Heart right ventricle (tissue), 16 donors: ENCODE measurements at regions of chr11 and their contacts with region 1.

Region 1: DNA sequence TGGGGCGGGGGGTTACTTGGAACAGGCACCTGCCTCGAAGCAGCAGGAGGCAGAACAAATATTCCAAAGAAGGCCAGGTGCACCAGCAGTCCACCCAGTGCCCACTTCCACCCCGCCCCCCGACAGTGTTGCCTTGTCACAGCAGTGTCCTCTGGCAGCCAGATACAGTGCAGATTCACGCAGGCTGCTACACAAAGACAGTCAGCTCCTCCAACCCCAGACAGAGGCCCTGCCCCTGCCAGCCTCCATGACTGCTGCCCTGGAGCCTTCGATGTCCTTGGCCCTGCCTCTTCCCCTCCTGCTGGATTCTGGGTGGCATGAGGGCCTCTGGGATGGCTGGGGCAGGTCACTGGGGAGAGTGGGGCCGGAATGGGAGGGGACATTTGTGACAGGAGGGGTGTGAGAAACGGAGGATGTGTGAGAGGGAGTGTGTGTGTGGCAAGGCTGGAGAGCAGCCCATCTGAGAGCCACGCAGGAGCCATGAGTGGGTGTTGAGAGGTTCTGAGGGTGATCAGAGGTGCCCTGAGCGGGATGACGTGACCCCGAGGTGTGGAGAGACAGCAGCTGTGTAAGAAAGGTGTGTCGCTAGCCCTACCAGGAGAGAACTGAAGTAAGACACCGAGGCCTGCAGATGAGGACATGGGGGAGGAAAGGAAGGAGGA is 173.7 kb downstream of the CEP164 start:
- DNase-seq: no peak
- ATAC-seq: peak in 1 of 8 donors; percentile 18
- H3K4me3 ChIP-seq: no peak overlapping the region
- H3K27ac ChIP-seq: no peak overlapping the region
- H3K4me1 ChIP-seq: no peaks in the 10 kb centered on the region
- H3K27me3 ChIP-seq: peaks cover 0 to 10% (median 0%) of the 10 kb centered on the region in 7 donors
- CTCF ChIP-seq: no peak

Region 2: GRCh38 chr11:117444711-117445658 is 56.4 kb before region 1 on chr11:
- intact Hi-C with region 1: no loop called
- DNase-seq: no peak
- ATAC-seq: peak in 3 of 8 donors; percentile 46 to 56 (median 52)
- H3K4me3 ChIP-seq: no peak overlapping the region
- H3K27ac ChIP-seq: no peak overlapping the region
- H3K4me1 ChIP-seq: peaks cover 0 to 11% (median 0%) of the 10 kb centered on the region in 9 donors
- H3K27me3 ChIP-seq: peaks cover 0 to 20% (median 10%) of the 10 kb centered on the region in 7 donors
- CTCF ChIP-seq: no peak

Region 3: GRCh38 chr11:117560780-117561530 is 59.6 kb after region 1 on chr11:
- intact Hi-C with region 1: loop called in 1 of 10 experiments (anchors 10 kb)
- DNase-seq: no peak
- ATAC-seq: no peak
- H3K4me3 ChIP-seq: no peak overlapping the region
- H3K27ac ChIP-seq: no peak overlapping the region
- H3K4me1 ChIP-seq: no peaks in the 10 kb centered on the region
- H3K27me3 ChIP-seq: peaks cover 0 to 12% (median 0%) of the 10 kb centered on the region in 7 donors
- CTCF ChIP-seq: no peak